ENCODE measurements at regions of chr15 and their contacts with region 1.

Region 1: DNA sequence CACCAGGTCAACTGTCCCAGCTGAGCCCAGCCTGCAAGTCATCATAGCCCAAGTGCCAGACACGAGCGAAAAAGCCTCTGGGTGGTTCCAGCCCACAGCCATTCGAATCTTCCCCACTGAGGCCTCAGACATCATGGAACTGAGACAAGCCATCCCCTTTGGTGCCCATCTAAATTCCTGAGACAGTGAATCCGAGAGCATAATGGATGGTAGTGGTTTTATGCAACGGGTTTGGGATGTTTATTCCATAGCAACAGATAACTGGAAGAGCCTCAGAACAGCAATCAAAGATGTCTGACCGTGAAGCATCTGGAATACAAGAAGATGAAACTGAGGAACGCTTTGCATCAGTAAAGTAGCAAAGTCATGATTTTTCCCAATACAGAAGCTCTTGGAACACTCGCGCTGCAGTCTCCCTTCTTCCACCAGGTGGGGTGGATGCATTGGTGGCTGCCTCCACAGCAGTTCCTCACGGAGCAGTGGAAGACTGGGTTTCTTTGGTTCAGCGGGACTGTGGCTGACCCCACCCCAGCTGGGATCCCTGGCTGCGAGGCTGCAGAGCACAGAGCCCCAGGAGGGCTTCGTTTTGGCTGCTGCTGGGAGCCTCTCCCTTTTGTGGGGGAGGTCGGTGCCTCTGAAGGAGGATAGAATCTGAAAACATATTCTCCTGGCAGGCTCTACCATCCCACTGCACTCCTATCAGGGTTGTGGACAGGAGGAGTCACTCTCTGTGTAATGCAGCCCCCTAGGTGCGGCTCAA is 26.4 kb upstream of the PDE8A start:
- DNase-seq: no peak
- ATAC-seq: peak; percentile 42
- H3K4me3 Mint-ChIP-seq: no peak overlapping the region
- H3K27ac Mint-ChIP-seq: no peak overlapping the region
- H3K4me1 Mint-ChIP-seq: peaks cover 13% of the 10 kb centered on the region
- H3K27me3 Mint-ChIP-seq: peaks cover 15% of the 10 kb centered on the region
- CTCF ChIP-seq: no peak

Region 2: DNA sequence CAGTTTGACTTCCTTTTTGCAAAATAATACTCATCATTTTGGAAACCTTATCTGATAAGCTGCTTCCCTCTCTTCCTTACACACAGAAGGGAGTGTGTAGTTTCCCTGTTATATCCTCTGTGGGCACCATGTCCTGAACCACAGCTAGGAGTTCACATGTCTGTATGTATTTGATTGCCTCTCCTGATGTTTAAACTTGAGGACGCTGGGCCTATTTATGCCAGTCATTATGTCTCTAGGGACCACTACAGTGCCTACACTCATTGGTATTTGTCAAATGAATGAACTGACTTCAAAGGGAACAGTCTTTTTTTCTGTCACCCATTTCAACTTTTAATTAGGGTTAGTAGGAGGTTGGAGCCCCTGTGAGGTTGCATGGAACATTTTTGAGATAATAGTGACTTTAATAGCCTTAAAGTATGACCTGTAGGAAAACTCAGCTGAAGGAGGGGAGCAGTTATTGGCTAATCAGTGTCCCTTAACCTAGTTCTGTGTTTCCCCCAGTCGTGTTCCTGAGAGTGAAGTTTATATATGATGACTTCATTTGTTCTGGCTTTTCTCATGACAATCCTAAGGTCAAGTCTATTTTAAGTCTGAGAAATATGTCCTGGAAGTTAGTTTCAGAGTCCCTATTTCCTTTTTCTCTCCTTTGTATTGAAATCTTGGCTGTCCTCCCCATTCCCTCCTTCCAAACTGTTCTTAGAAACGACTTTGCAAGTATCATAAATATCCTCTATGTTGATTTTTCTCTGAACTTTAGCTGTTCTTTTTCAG is 55.3 kb after region 1 on chr15:
- CTCF ChIA-PET with region 1: interaction called, 7 read pairs
- POLR2A ChIA-PET with region 1: no interaction called
- intact Hi-C with region 1: loop called (anchors 1 kb)
- DNase-seq: no peak
- ATAC-seq: peak; percentile 75
- H3K4me3 Mint-ChIP-seq: peak overlapping the region; percentile 33
- H3K27ac Mint-ChIP-seq: peak overlapping the region; percentile 74
- H3K4me1 Mint-ChIP-seq: peaks cover 61% of the 10 kb centered on the region
- H3K27me3 Mint-ChIP-seq: no peaks in the 10 kb centered on the region
- CTCF ChIP-seq: no peak

Region 3: DNA sequence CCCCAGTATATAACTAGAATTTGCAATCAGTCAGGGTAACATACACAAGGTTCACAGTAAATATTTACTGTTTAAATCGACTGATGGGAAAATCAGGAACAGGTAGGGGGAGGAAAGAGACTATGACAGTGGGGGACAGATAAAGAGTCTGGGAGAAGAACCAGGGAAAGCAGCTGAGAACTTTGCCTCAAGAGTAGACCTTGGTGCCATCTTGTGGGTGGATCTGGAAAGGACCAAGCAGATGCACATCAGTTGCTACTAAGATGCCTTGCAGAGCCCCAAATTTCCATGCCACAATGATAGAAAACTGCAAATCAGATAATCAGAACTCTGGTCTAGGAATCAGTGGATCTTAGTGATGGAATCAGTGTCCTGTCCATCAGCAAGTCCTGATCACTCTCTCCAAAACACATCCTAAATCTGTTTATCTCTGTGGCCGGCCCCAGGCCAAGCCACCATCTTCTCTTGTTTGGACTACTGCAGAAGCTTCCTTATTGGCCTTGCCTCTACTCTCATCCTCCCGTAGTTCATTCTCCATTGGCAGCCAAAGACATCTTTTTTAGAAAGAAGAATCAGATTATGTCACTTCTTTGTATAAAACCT is 89.1 kb after region 1 on chr15:
- CTCF ChIA-PET with region 1: interaction called, 41 read pairs
- POLR2A ChIA-PET with region 1: interaction called, 5 read pairs
- intact Hi-C with region 1: loop called (anchors 1 kb)
- DNase-seq: no peak
- ATAC-seq: peak; percentile 56
- H3K4me3 Mint-ChIP-seq: no peak overlapping the region
- H3K27ac Mint-ChIP-seq: no peak overlapping the region
- H3K4me1 Mint-ChIP-seq: peaks cover 31% of the 10 kb centered on the region
- H3K27me3 Mint-ChIP-seq: no peaks in the 10 kb centered on the region
- CTCF ChIP-seq: no peak

Region 4: DNA sequence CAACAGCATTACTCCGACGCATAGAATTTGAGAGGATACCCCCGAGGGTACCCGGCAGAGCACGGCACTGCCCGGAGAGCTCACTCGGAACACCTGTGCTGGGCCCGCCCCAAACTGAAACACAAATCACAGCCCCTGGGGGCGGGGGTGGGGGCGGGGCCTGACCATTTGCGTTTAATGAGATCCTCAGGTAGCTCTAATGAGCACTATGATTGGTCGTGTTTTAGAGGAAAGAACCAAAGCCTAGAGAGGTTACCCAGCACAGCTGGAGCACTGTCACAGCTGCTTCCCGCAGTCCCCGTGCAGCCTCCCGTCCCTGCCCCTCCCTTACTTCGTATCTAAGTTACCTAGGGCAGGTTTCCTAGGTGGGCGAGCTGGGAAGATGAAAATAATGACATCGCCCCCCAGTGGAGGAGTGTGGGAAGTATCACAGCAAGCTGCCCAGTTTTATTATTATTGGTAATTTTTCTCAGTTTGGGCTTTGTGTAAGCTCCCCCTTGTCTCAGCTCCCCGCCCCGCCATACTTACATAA is 213.4 kb after region 1 on chr15:
- CTCF ChIA-PET with region 1: interaction called, 3 read pairs
- POLR2A ChIA-PET with region 1: no interaction called
- intact Hi-C with region 1: loop called (anchors 5 kb)
- DNase-seq: peak; percentile 15
- ATAC-seq: peak; percentile 45
- H3K4me3 Mint-ChIP-seq: no peak overlapping the region
- H3K27ac Mint-ChIP-seq: no peak overlapping the region
- H3K4me1 Mint-ChIP-seq: no peaks in the 10 kb centered on the region
- H3K27me3 Mint-ChIP-seq: peaks cover 33% of the 10 kb centered on the region
- CTCF ChIP-seq: no peak